ENCODE measurements at regions of chr9 and their contacts with region 1.

Region 1: GRCh38 chr9:124771021-124771866 is at the start of gene NR6A1:
- DNase-seq: peak; percentile 98
- H3K4me3 ChIP-seq: peak within 1 kb of the TSS; percentile 50 to 92 (median 82)
- H3K27ac ChIP-seq: peak within 1 kb of the TSS; percentile 78 to 86 (median 78)
- H3K4me1 ChIP-seq: peaks cover 0 to 40% (median 23%) of the 10 kb centered on the region in 4 donors
- H3K27me3 ChIP-seq: peaks cover 0 to 49% (median 39%) of the 10 kb centered on the region in 3 donors
- CTCF ChIP-seq: peak in 2 of 4 experiments; percentile 19 to 28
- EP300 ChIP-seq: no peak
- POLR2A ChIP-seq: no peak
- total RNA-seq, gene NR6A1: 1.2 to 3.0 (median 2.0) TPM

Region 2: DNA sequence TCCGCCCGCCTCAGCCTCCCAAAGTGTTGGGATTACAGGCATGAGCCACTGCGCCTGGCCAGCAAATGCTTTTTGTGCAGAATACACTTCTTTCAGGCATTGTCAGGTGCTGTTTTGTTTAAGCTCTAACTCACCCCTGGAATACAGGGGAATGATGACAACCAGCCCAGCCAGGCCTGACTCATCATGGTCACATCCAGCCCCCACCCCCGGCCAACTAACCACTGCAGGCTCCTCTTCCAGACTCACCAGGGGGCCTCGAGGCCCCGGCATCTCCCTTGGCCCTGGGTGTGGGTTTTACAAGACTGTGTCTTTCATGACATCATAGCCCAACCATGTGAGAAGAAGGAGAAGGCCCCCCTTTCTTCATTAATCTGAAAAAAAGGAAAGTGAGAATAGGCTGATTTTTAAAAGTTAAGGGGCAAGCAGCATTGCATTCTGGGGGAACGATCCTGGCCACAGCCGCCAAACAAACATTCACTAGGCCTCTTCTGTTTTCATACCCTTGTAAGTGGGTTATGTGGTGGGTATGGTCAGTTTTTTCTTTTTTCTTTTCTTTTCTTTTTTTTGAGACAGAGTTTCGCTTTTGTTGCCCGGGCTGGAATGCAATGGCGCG is 41.3 kb after region 1 on chr9:
- intact Hi-C with region 1: loop called (anchors 2 kb)
- DNase-seq: peak; percentile 93
- H3K4me3 ChIP-seq: no peak overlapping the region
- H3K27ac ChIP-seq: peak overlapping the region; percentile 73 to 95 (median 80)
- H3K4me1 ChIP-seq: peaks cover 0 to 43% (median 41%) of the 10 kb centered on the region in 4 donors
- H3K27me3 ChIP-seq: no peaks in the 10 kb centered on the region
- CTCF ChIP-seq: no peak
- EP300 ChIP-seq: no peak
- POLR2A ChIP-seq: no peak

Region 3: GRCh38 chr9:124852829-124853531 is 81.7 kb after region 1 on chr9 and contains the start of gene WDR38:
- intact Hi-C with region 1: loop called (anchors 1 kb)
- DNase-seq: peak; percentile 85
- H3K4me3 ChIP-seq: peak within 1 kb of the TSS; percentile 28 to 55 (median 42)
- H3K27ac ChIP-seq: peak within 1 kb of the TSS; percentile 55 to 69 (median 58)
- H3K4me1 ChIP-seq: peaks cover 0 to 27% (median 20%) of the 10 kb centered on the region in 4 donors
- H3K27me3 ChIP-seq: no peaks in the 10 kb centered on the region
- CTCF ChIP-seq: peak; percentile 99 to 100 (median 100)
- EP300 ChIP-seq: no peak
- POLR2A ChIP-seq: no peak
- total RNA-seq, gene WDR38: not detected

Region 4: GRCh38 chr9:125143375-125144090 is 372.3 kb after region 1 on chr9 and contains the start of gene SCAI:
- intact Hi-C with region 1: loop called (anchors 5 kb)
- DNase-seq: peak; percentile 100
- H3K4me3 ChIP-seq: peak within 1 kb of the TSS; percentile 73 to 96 (median 86)
- H3K27ac ChIP-seq: peak within 1 kb of the TSS; percentile 83 to 87 (median 84)
- H3K4me1 ChIP-seq: peaks cover 0 to 51% (median 30%) of the 10 kb centered on the region in 4 donors
- H3K27me3 ChIP-seq: no peaks in the 10 kb centered on the region
- CTCF ChIP-seq: peak; percentile 98 to 99 (median 99)
- EP300 ChIP-seq: no peak
- POLR2A ChIP-seq: no peak
- total RNA-seq, gene SCAI: 5.4 to 15.8 (median 11.4) TPM

Region 5: GRCh38 chr9:125374443-125375309 is 603.4 kb after region 1 on chr9:
- intact Hi-C with region 1: loop called (anchors 2 kb)
- DNase-seq: peak; percentile 81
- H3K4me3 ChIP-seq: peak overlapping the region in 3 of 4 donors; percentile 18 to 34 (median 33)
- H3K27ac ChIP-seq: no peak overlapping the region
- H3K4me1 ChIP-seq: peaks cover 0 to 10% (median 7%) of the 10 kb centered on the region in 4 donors
- H3K27me3 ChIP-seq: peaks cover 0 to 6% (median 4%) of the 10 kb centered on the region in 3 donors
- CTCF ChIP-seq: peak; percentile 54 to 80 (median 68)
- EP300 ChIP-seq: no peak
- POLR2A ChIP-seq: no peak